ENCODE measurements at regions of chr5 and their contacts with region 1.

Region 1: DNA sequence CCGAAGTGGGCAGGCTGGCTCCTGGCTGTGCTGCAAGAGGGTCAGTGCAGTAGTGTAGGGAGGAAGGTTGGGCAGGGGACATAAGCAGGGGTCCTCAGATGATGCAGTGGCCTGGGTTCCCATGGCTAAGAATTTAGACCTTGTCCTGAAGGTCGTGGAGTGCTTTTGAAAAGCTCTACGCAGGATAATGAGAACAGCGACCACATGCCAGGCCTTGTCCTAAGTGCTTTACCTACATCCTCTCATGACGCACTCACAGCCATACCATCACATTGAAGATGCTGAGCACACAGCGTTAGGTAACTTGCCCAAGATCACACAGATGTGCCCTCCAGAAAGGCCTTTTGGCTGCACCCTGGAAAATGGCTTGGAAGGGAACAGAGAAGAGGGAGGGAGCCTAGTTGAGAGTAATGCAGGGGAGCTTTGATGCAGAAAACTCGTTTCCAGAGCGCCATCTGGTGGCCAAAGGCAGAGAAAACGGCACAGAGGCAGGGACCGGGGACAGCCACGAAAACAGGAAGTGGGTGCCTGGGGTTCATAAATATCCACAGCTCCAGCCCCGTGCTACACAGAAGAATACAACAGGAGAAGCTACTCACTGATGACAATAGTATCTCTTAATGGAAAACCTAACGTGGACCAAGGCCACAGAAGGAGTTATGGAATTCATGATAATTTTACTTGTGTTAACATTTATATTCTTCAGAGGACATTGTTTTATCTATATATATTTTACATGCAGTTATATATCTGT is 2.6 kb upstream of the PCDH12 start:
- DNase-seq: peak; percentile 82 to 91 (median 84)
- H3K4me3 ChIP-seq: peak overlapping the region; percentile 28
- H3K4me3 Mint-ChIP-seq: peak overlapping the region; percentile 6 to 76 (median 52)
- H3K27ac ChIP-seq: no peak overlapping the region
- H3K27ac Mint-ChIP-seq: peak overlapping the region; percentile 8 to 92 (median 84)
- H3K4me1 ChIP-seq: peaks cover 39% of the 10 kb centered on the region
- H3K4me1 Mint-ChIP-seq: peaks cover 42 to 50% (median 48%) of the 10 kb centered on the region in 3 donors
- H3K27me3 ChIP-seq: no peaks in the 10 kb centered on the region
- H3K27me3 Mint-ChIP-seq: no peaks in the 10 kb centered on the region

Region 2: DNA sequence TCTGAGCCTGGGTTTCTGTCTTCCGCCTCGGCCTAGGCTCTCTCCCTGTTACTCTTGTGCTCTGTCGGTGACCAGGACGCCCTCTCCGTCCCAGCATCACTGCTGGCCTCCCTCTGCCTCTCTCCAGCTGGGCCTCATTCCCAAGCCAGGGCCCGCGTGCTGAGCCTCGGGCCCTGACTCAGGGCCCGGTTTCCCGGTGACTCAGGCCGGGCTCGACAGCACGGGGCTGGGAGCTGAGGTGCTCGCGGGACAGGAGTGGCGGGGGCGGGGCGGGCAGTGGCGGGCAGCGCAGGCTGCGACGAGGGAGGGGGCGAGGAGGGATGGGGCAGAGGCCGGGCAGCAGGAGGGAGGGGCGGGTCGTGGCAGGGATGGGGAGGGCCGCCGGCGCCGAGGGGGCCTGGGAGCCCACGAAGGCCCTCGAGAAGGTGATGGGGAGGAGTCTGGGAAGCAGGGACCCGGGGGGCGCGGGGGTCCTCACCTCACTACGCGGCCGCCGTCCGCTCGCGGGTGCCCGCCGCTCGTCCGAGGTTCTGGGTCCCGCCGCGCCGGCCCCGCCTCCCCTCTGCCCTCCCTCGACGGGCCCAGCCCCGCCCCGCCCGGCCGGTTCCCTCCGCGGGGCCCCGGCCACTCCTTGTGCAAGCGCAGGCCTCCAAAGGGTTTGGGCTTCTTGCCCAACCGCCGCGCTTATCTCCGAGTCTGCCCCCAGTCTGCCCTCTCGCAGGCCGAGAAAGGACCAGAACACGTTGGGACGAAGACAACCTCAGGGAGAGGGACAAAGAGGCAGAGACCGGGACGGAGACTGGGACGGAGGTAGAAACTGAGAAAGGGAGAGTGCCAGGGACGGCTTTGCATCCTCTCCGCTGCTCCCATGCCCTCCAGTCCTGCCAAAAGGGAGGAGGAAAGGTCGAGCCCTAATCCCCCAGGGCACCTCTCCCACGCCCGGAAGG is 278.7 kb before region 1 on chr5 and contains the start of gene ARAP3:
- CTCF ChIA-PET with region 1: interaction called, 15 read pairs
- POLR2A ChIA-PET with region 1: interaction called, 8 read pairs
- DNase-seq: peak in 4 of 5 donors; percentile 17 to 64 (median 39)
- H3K4me3 ChIP-seq: peak within 1 kb of the TSS; percentile 50
- H3K4me3 Mint-ChIP-seq: peak within 1 kb of the TSS; percentile 65 to 91 (median 84)
- H3K27ac ChIP-seq: peak within 1 kb of the TSS; percentile 38
- H3K27ac Mint-ChIP-seq: peak within 1 kb of the TSS; percentile 7 to 93 (median 78)
- H3K4me1 ChIP-seq: peaks cover 27% of the 10 kb centered on the region
- H3K4me1 Mint-ChIP-seq: peaks cover 25 to 46% (median 29%) of the 10 kb centered on the region in 3 donors
- H3K27me3 ChIP-seq: no peaks in the 10 kb centered on the region
- H3K27me3 Mint-ChIP-seq: peaks cover 0 to 4% of the 10 kb centered on the region in 2 donors
- total RNA-seq, gene ARAP3: 6.9 to 7.9 TPM

Region 3: DNA sequence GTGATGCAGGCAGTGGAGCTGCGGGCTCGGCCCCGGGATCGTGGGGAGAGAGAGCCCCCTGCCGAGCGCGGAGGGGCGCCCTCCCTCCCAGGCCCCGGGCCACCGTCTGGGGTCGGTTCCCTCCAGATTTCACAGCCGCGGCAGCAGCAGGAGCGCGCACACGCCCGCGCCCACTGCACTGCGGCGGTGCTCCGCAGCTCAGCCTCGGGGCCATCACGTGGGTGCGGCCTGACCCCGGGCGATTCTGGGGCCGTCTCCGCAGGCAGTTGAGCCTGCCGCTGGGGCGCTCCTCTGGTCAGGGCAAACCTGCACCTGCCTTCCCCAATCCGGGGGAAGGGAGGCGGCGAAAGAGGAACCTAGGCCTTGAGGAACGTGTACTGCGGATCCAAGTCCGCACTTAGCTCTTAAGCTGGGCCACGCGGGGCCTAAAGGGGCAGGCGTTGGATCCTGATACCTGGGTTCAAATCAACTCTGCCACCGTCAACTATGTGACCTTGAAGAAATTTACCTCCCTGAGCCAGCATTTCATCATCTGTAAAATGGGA is 46.4 kb before region 1 on chr5:
- CTCF ChIA-PET with region 1: interaction called, 15 read pairs
- POLR2A ChIA-PET with region 1: no interaction called
- DNase-seq: peak in 1 of 5 donors; percentile 26
- H3K4me3 ChIP-seq: peak overlapping the region; percentile 26
- H3K4me3 Mint-ChIP-seq: peak overlapping the region in 3 of 7 donors; percentile 41 to 52 (median 47)
- H3K27ac ChIP-seq: no peak overlapping the region
- H3K27ac Mint-ChIP-seq: no peak overlapping the region
- H3K4me1 ChIP-seq: peaks cover 4% of the 10 kb centered on the region
- H3K4me1 Mint-ChIP-seq: peaks cover 8 to 17% (median 12%) of the 10 kb centered on the region in 3 donors
- H3K27me3 ChIP-seq: peaks cover 19% of the 10 kb centered on the region
- H3K27me3 Mint-ChIP-seq: peaks cover 28 to 56% of the 10 kb centered on the region in 2 donors

Region 4: GRCh38 chr5:141944076-141944475 is 16.6 kb before region 1 on chr5:
- CTCF ChIA-PET with region 1: interaction called, 11 read pairs
- POLR2A ChIA-PET with region 1: no interaction called
- DNase-seq: no peak
- H3K4me3 ChIP-seq: no peak overlapping the region
- H3K4me3 Mint-ChIP-seq: no peak overlapping the region
- H3K27ac ChIP-seq: no peak overlapping the region
- H3K27ac Mint-ChIP-seq: peak overlapping the region in 1 of 8 donors; percentile 11
- H3K4me1 ChIP-seq: no peaks in the 10 kb centered on the region
- H3K4me1 Mint-ChIP-seq: peaks cover 0 to 2% (median 0%) of the 10 kb centered on the region in 3 donors
- H3K27me3 ChIP-seq: no peaks in the 10 kb centered on the region
- H3K27me3 Mint-ChIP-seq: no peaks in the 10 kb centered on the region

Region 5: DNA sequence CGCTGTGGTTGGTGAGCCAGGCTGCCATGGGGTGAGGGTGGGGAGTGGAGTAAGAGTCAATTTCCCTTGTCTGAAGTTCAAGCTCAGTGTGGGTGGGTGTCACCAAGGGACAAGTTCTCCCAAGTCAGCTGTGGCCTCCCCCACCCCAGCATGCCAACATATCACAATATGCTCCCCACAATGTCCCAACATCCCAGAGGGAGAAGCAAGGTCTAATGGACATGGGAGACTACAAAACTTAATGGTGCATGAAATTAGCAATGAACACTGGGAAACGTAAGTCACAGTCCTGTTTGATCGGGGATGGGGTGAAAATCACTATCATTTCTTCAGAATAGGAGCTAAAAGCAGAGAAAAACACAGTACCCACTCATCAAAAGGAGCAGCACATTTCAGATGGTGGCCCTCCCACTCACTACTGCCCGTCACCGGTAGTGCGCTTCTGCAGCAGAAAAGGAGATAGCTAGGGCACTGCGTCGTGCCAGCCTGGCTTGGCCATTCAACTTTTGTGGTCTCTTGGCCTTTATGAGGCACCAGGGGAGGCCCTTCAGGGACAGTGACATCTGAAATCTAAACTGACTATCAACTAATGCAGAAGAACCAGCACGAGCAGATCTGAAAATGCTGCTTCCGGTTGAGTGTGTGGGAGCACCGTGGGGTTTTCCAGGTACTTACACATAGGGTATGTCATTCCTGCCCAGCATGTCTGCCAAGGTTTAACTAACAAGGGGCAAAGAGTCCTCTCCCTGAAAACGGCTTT is 127.5 kb after region 1 on chr5:
- CTCF ChIA-PET with region 1: no interaction called
- POLR2A ChIA-PET with region 1: no interaction called
- DNase-seq: no peak
- H3K4me3 ChIP-seq: no peak overlapping the region
- H3K4me3 Mint-ChIP-seq: peak overlapping the region; percentile 54 to 78 (median 63)
- H3K27ac ChIP-seq: no peak overlapping the region
- H3K27ac Mint-ChIP-seq: peak overlapping the region; percentile 26 to 92 (median 80)
- H3K4me1 ChIP-seq: peaks cover 17% of the 10 kb centered on the region
- H3K4me1 Mint-ChIP-seq: peaks cover 18 to 22% (median 21%) of the 10 kb centered on the region in 3 donors
- H3K27me3 ChIP-seq: no peaks in the 10 kb centered on the region
- H3K27me3 Mint-ChIP-seq: peaks cover 0 to 2% of the 10 kb centered on the region in 2 donors